Activated CD4-positive, alpha-beta memory T cell treated with anti-CD3 and anti-CD28 coated beads, Interleukin-2, amount 10 ng/mL, durations not matched to agents 7 days and 5 days (primary cell): ENCODE measurements at regions of chr11 and their contacts with region 1.

Region 1: GRCh38 chr11:35822815-35823495 is 120.9 kb upstream of the LDLRAD3 start:
- DNase-seq: no peak
- H3K4me3 Mint-ChIP-seq: no peak overlapping the region
- H3K27ac Mint-ChIP-seq: no peak overlapping the region
- H3K4me1 Mint-ChIP-seq: peaks cover 3% of the 10 kb centered on the region
- H3K27me3 Mint-ChIP-seq: no peaks in the 10 kb centered on the region

Region 2: DNA sequence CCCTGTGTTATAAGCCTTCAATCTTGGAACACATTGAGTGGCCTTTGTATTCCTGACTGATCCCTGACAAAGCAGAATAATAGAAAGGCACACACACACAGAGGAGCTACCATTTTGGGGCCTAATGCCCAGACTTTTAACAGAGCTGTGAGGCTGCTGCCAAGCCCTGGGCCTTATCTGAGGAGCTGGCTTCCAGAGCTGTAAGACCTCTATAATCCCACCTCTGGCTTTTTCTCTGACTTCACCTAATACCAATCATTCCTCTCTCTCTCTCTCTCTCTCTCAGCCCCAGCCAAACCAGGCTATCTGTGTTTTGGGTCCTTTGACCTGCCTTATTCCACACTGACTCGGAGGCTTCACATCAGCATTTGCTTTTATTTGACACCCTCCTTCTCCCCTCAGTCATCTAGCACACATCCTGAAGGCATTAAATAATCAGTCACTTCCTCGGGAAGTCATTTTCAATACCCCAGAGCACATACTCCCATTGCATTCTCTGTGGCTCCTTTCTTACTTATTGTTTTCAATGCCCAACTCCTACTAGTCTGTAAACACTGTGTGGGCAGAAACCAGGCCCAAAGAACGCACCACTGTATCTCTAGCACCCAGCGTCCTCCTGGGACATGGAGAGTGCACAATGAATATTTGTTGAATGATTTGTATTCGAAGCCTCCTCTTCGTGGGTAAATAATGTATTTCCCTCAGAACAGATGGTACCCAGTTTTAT is 181.6 kb before region 1 on chr11:
- CTCF ChIA-PET with region 1: no interaction called
- POLR2A ChIA-PET with region 1: no interaction called
- DNase-seq: no peak
- H3K4me3 Mint-ChIP-seq: no peak overlapping the region
- H3K27ac Mint-ChIP-seq: no peak overlapping the region
- H3K4me1 Mint-ChIP-seq: no peaks in the 10 kb centered on the region
- H3K27me3 Mint-ChIP-seq: peaks cover 6% of the 10 kb centered on the region

Region 3: GRCh38 chr11:35709386-35709785 is 113.6 kb before region 1 on chr11:
- CTCF ChIA-PET with region 1: no interaction called
- POLR2A ChIA-PET with region 1: no interaction called
- DNase-seq: no peak
- H3K4me3 Mint-ChIP-seq: no peak overlapping the region
- H3K27ac Mint-ChIP-seq: no peak overlapping the region
- H3K4me1 Mint-ChIP-seq: no peaks in the 10 kb centered on the region
- H3K27me3 Mint-ChIP-seq: no peaks in the 10 kb centered on the region

Region 4: DNA sequence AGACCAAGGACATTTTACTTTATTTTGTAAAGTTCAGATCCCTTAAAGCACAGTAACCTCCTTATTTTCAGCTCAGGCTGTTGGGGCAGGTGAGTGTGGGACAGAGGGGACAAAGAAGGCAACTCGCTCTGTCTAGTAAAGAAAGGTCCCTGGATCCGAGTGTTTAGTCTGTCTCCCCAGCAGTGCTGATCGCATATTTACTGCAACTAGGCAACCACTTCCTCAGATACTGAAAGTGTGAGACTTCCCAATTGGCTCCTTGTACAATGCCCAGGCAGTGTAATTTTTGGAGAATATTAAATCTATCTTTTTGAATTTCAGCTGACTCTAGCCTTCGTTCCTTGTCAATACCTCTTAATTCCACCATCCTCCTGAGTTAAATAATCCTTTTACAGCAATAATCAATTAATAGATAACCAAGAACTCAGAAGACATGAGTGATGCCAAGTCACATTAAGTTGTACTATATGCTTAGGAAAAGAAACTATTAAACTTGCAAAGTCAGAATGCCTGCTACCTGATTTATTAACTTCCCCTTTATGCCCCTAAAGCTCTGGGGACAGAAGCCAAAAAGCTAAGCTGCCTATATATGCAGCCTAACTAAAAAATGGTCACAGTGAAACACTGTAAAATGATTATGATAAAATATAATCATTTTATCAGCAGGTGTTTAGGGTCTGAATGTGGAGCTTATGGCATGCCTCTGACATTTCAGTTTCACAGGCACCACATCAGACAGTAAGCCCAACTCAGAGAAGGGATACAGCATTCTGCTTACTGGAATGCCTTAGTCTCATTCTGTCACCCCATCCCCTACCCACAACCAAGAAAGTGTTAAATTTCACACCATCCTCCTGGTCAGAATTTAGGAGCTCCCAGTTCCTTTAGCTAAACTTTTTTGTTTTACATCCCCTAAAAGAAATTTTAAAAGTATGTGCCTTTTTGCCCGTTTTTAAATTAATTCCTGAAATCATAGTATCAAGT is 21.7 kb before region 1 on chr11:
- CTCF ChIA-PET with region 1: interaction called, 15 read pairs
- POLR2A ChIA-PET with region 1: no interaction called
- DNase-seq: no peak
- H3K4me3 Mint-ChIP-seq: no peak overlapping the region
- H3K27ac Mint-ChIP-seq: no peak overlapping the region
- H3K4me1 Mint-ChIP-seq: peaks cover 2% of the 10 kb centered on the region
- H3K27me3 Mint-ChIP-seq: no peaks in the 10 kb centered on the region

Region 5: GRCh38 chr11:35811775-35812174 is 11.2 kb before region 1 on chr11:
- CTCF ChIA-PET with region 1: interaction called, 28 read pairs
- POLR2A ChIA-PET with region 1: no interaction called
- DNase-seq: no peak
- H3K4me3 Mint-ChIP-seq: no peak overlapping the region
- H3K27ac Mint-ChIP-seq: no peak overlapping the region
- H3K4me1 Mint-ChIP-seq: no peaks in the 10 kb centered on the region
- H3K27me3 Mint-ChIP-seq: no peaks in the 10 kb centered on the region

Region 6: GRCh38 chr11:35859301-35859700 is 36.3 kb after region 1 on chr11:
- CTCF ChIA-PET with region 1: no interaction called
- POLR2A ChIA-PET with region 1: no interaction called
- DNase-seq: no peak
- H3K4me3 Mint-ChIP-seq: no peak overlapping the region
- H3K27ac Mint-ChIP-seq: no peak overlapping the region
- H3K4me1 Mint-ChIP-seq: no peaks in the 10 kb centered on the region
- H3K27me3 Mint-ChIP-seq: peaks cover 2% of the 10 kb centered on the region

Region 7: GRCh38 chr11:35874751-35875450 is 51.9 kb after region 1 on chr11:
- CTCF ChIA-PET with region 1: interaction called, 10 read pairs
- POLR2A ChIA-PET with region 1: no interaction called
- DNase-seq: no peak
- H3K4me3 Mint-ChIP-seq: no peak overlapping the region
- H3K27ac Mint-ChIP-seq: no peak overlapping the region
- H3K4me1 Mint-ChIP-seq: no peaks in the 10 kb centered on the region
- H3K27me3 Mint-ChIP-seq: peaks cover 3% of the 10 kb centered on the region